ENCODE measurements at regions of chr2 and their contacts with region 1.

Region 1: GRCh38 chr2:187842978-187843847 is 289.0 kb upstream of the TFPI start:
- DNase-seq: no peak
- ATAC-seq: peak; percentile 78
- H3K4me3 ChIP-seq: no peak overlapping the region
- H3K27ac ChIP-seq: no peak overlapping the region
- H3K4me1 ChIP-seq: no peaks in the 10 kb centered on the region
- H3K27me3 ChIP-seq: no peaks in the 10 kb centered on the region

Region 2: DNA sequence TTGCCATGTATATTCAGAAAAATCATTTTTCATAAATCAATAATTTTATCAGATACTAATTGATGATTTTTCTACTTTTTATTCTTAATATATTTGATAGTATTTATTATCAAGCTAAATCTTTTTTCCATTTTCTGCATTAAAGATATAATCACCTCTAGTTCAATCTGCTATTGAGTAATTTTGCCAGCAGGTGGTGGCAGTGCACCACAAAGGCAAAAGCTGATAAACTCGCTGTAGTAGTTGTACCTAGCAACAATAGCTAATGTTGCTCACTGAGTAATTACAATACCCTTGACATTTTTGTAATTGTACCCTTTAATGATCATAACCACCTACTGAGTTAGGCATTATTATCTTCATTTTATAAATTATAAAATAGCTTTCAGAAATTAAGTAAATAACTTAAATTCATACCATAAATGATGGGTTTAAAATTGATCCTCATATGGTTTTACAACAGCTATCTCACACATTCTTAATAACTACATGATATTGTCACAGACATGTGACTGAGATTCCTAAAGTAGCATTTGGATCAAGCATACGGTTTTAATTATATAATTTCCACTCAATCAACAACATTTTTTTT is 343.2 kb before region 1 on chr2:
- intact Hi-C with region 1: loop called (anchors 5 kb)
- DNase-seq: peak in 1 of 2 donors; percentile 52
- ATAC-seq: peak; percentile 84
- H3K4me3 ChIP-seq: no peak overlapping the region
- H3K27ac ChIP-seq: no peak overlapping the region
- H3K4me1 ChIP-seq: no peaks in the 10 kb centered on the region
- H3K27me3 ChIP-seq: no peaks in the 10 kb centered on the region

Region 3: GRCh38 chr2:187581125-187581896 is 261.9 kb before region 1 on chr2:
- intact Hi-C with region 1: loop called in 1 of 2 experiments (anchors 5 kb)
- DNase-seq: no peak
- ATAC-seq: peak; percentile 59
- H3K4me3 ChIP-seq: peak overlapping the region; percentile 31 to 90
- H3K27ac ChIP-seq: no peak overlapping the region
- H3K4me1 ChIP-seq: peaks cover 0 to 2% of the 10 kb centered on the region in 2 donors
- H3K27me3 ChIP-seq: no peaks in the 10 kb centered on the region

Region 4: GRCh38 chr2:187594801-187595200 is 248.4 kb before region 1 on chr2:
- intact Hi-C with region 1: loop called (anchors 5 kb)
- DNase-seq: no peak
- ATAC-seq: no peak
- H3K4me3 ChIP-seq: no peak overlapping the region
- H3K27ac ChIP-seq: no peak overlapping the region
- H3K4me1 ChIP-seq: no peaks in the 10 kb centered on the region
- H3K27me3 ChIP-seq: no peaks in the 10 kb centered on the region

Region 5: GRCh38 chr2:187644981-187645380 is 198.2 kb before region 1 on chr2:
- intact Hi-C with region 1: loop called in 1 of 2 experiments (anchors 5 kb)
- DNase-seq: no peak
- ATAC-seq: no peak
- H3K4me3 ChIP-seq: no peak overlapping the region
- H3K27ac ChIP-seq: no peak overlapping the region
- H3K4me1 ChIP-seq: no peaks in the 10 kb centered on the region
- H3K27me3 ChIP-seq: no peaks in the 10 kb centered on the region

Region 6: GRCh38 chr2:188506843-188507242 is 663.6 kb after region 1 on chr2:
- intact Hi-C with region 1: loop called (anchors 10 kb)
- DNase-seq: no peak
- ATAC-seq: no peak
- H3K4me3 ChIP-seq: no peak overlapping the region
- H3K27ac ChIP-seq: peak overlapping the region in 1 of 2 donors; percentile 28
- H3K4me1 ChIP-seq: peaks cover 0 to 4% of the 10 kb centered on the region in 2 donors
- H3K27me3 ChIP-seq: no peaks in the 10 kb centered on the region